ENCODE measurements at regions of chr19 and their contacts with region 1.

Region 1: GRCh38 chr19:50357178-50358100 is 8.0 kb downstream of the NAPSA start:
- DNase-seq: peak; percentile 86 to 90 (median 88)
- H3K4me3 ChIP-seq: peak overlapping the region; percentile 45 to 69
- H3K4me3 Mint-ChIP-seq: peak overlapping the region; percentile 88 to 95 (median 91)
- H3K27ac ChIP-seq: peak overlapping the region; percentile 95
- H3K27ac Mint-ChIP-seq: peak overlapping the region; percentile 97 to 98 (median 98)
- H3K4me1 ChIP-seq: peaks cover 12% of the 10 kb centered on the region
- H3K4me1 Mint-ChIP-seq: peaks cover 14 to 47% (median 27%) of the 10 kb centered on the region in 4 donors
- H3K27me3 ChIP-seq: no peaks in the 10 kb centered on the region
- H3K27me3 Mint-ChIP-seq: peaks cover 0 to 2% of the 10 kb centered on the region in 2 donors

Region 2: GRCh38 chr19:50333035-50333736 is 24.3 kb before region 1 on chr19:
- CTCF ChIA-PET with region 1: interaction called, 11 read pairs
- POLR2A ChIA-PET with region 1: interaction called, 27 read pairs
- intact Hi-C with region 1: loop called (anchors 1 kb)
- DNase-seq: peak in 4 of 5 donors; percentile 88 to 94 (median 92)
- H3K4me3 ChIP-seq: peak overlapping the region; percentile 67 to 76
- H3K4me3 Mint-ChIP-seq: peak overlapping the region; percentile 82 to 97 (median 92)
- H3K27ac ChIP-seq: peak overlapping the region; percentile 3
- H3K27ac Mint-ChIP-seq: peak overlapping the region; percentile 69 to 98 (median 95)
- H3K4me1 ChIP-seq: peaks cover 51% of the 10 kb centered on the region
- H3K4me1 Mint-ChIP-seq: peaks cover 28 to 62% (median 41%) of the 10 kb centered on the region in 4 donors
- H3K27me3 ChIP-seq: peaks cover 17% of the 10 kb centered on the region
- H3K27me3 Mint-ChIP-seq: peaks cover 14 to 38% of the 10 kb centered on the region in 2 donors

Region 3: DNA sequence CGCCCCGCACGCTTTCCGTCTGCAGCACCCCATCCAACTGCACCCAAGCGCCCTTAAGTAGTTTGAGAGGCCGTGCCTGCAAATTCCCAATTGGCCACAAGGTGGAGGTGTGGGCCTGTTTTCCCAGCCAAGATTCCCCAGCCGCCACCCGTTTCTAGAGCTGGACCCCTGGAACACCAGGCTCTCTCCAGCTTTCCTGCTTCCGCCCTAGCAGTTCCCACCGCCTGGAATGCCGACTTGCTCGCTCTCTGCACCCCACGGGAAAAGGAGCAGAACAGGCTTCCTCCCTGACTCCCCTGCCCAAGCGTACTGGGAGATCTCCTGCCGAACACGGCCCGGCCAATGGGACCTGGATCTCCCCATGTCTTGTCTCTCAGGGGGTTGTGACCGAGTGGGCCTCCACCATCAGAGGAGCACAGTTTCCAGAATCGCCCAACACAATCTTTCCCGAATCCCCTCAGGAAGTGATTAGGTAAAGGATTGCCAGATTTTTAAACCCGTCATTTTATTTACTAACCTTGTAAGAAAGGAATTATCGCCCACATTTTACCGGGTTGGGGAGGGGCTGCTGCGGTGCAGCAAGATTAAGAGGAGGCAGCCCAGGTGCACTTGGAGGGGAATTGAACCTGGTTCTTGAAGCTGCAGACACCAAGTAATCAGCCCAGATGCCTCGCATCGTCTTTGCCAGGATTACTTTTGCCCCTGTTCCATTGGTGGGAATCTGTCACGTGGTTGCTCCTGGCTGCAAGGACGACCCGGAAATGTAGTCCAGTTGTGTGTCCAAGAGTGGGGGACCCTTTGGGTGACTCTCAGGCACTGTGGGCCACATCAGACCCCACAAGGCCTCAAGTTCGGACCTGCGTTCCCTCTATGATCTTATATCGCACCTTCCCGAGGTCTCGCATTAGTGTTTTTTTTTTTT is 11.5 kb after region 1 on chr19:
- CTCF ChIA-PET with region 1: interaction called, 47 read pairs
- POLR2A ChIA-PET with region 1: interaction called, 35 read pairs
- intact Hi-C with region 1: loop called (anchors 1 kb)
- DNase-seq: peak; percentile 71 to 78 (median 78)
- H3K4me3 ChIP-seq: peak overlapping the region; percentile 32 to 88
- H3K4me3 Mint-ChIP-seq: peak overlapping the region; percentile 85 to 97 (median 90)
- H3K27ac ChIP-seq: peak overlapping the region; percentile 56
- H3K27ac Mint-ChIP-seq: peak overlapping the region; percentile 62 to 96 (median 90)
- H3K4me1 ChIP-seq: peaks cover 26% of the 10 kb centered on the region
- H3K4me1 Mint-ChIP-seq: peaks cover 17 to 43% (median 28%) of the 10 kb centered on the region in 4 donors
- H3K27me3 ChIP-seq: no peaks in the 10 kb centered on the region
- H3K27me3 Mint-ChIP-seq: no peaks in the 10 kb centered on the region

Region 4: GRCh38 chr19:50383852-50384684 is 26.6 kb after region 1 on chr19 and contains the start of gene POLD1:
- CTCF ChIA-PET with region 1: interaction called, 10 read pairs
- POLR2A ChIA-PET with region 1: interaction called, 28 read pairs
- intact Hi-C with region 1: loop called (anchors 1 kb)
- DNase-seq: peak; percentile 98 to 99 (median 99)
- H3K4me3 ChIP-seq: peak within 1 kb of the TSS; percentile 38 to 80
- H3K4me3 Mint-ChIP-seq: peak within 1 kb of the TSS; percentile 91 to 97 (median 94)
- H3K27ac ChIP-seq: peak within 1 kb of the TSS; percentile 67
- H3K27ac Mint-ChIP-seq: peak within 1 kb of the TSS; percentile 91 to 98 (median 94)
- H3K4me1 ChIP-seq: peaks cover 16% of the 10 kb centered on the region
- H3K4me1 Mint-ChIP-seq: peaks cover 22 to 39% (median 32%) of the 10 kb centered on the region in 4 donors
- H3K27me3 ChIP-seq: no peaks in the 10 kb centered on the region
- H3K27me3 Mint-ChIP-seq: no peaks in the 10 kb centered on the region
- total RNA-seq, gene POLD1: 40.4 to 41.1 TPM

Region 5: DNA sequence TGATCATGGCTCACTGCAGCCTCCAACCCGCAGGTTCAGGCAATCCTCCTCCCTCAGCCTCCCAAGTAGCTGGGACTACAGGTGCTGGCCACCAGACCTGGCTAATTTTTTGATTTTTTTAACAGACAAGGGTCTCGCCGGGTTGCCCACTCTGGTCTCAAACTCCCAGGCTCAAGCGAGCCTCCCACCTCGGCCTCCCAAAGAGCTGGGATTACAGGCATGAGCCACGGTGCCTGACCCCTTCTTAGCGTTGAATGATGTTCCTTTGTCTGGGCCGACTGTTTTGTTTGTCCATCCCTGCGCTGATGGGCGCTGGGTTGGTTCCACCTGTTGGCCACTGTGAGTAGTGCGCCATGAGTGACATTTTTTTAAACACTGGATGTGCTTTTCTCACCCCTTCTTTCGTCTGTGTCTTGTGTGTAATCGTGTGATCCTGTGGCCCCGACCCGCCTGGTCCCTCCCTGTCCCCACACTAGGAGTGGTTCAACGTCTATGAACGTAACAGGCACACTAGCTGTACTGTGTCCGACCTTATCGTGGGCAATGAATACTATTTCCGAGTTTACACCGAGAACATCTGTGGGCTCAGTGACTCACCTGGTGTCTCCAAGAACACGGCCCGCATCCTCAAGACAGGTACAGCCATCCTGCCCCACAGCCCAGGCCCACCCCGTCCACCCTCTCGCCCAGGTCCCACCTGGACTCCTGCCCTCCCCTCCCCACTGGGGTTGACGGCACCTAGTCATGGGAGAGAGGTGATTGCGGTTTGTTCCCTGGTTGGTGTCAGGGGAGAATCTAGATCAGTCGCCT is 103.8 kb after region 1 on chr19:
- CTCF ChIA-PET with region 1: interaction called, 19 read pairs
- POLR2A ChIA-PET with region 1: interaction called, 9 read pairs
- intact Hi-C with region 1: loop called (anchors 1 kb)
- DNase-seq: peak in 4 of 5 donors; percentile 37 to 51 (median 46)
- H3K4me3 ChIP-seq: no peak overlapping the region
- H3K4me3 Mint-ChIP-seq: no peak overlapping the region
- H3K27ac ChIP-seq: no peak overlapping the region
- H3K27ac Mint-ChIP-seq: peak overlapping the region in 1 of 7 donors; percentile 63
- H3K4me1 ChIP-seq: no peaks in the 10 kb centered on the region
- H3K4me1 Mint-ChIP-seq: peaks cover 3 to 6% (median 4%) of the 10 kb centered on the region in 4 donors
- H3K27me3 ChIP-seq: peaks cover 2% of the 10 kb centered on the region
- H3K27me3 Mint-ChIP-seq: peaks cover 5 to 18% of the 10 kb centered on the region in 2 donors

Region 6: GRCh38 chr19:50511068-50511822 is 153.8 kb after region 1 on chr19 and contains the start of gene JOSD2:
- CTCF ChIA-PET with region 1: no interaction called
- POLR2A ChIA-PET with region 1: interaction called, 22 read pairs
- intact Hi-C with region 1: loop called (anchors 1 kb)
- DNase-seq: peak; percentile 94 to 99 (median 98)
- H3K4me3 ChIP-seq: peak within 1 kb of the TSS; percentile 61 to 83
- H3K4me3 Mint-ChIP-seq: peak within 1 kb of the TSS; percentile 89 to 97 (median 92)
- H3K27ac ChIP-seq: peak within 1 kb of the TSS; percentile 78
- H3K27ac Mint-ChIP-seq: peak within 1 kb of the TSS; percentile 97 to 99 (median 99)
- H3K4me1 ChIP-seq: peaks cover 13% of the 10 kb centered on the region
- H3K4me1 Mint-ChIP-seq: peaks cover 7 to 32% (median 20%) of the 10 kb centered on the region in 4 donors
- H3K27me3 ChIP-seq: no peaks in the 10 kb centered on the region
- H3K27me3 Mint-ChIP-seq: peaks cover 0 to 9% of the 10 kb centered on the region in 2 donors
- total RNA-seq, gene JOSD2: 29.5 to 35.8 TPM

Region 7: GRCh38 chr19:50777754-50778303 is 420.4 kb after region 1 on chr19:
- CTCF ChIA-PET with region 1: interaction called, 24 read pairs
- POLR2A ChIA-PET with region 1: no interaction called
- intact Hi-C with region 1: loop called (anchors 1 kb)
- DNase-seq: no peak
- H3K4me3 ChIP-seq: no peak overlapping the region
- H3K4me3 Mint-ChIP-seq: peak overlapping the region in 1 of 8 donors; percentile 11
- H3K27ac ChIP-seq: no peak overlapping the region
- H3K27ac Mint-ChIP-seq: no peak overlapping the region
- H3K4me1 ChIP-seq: no peaks in the 10 kb centered on the region
- H3K4me1 Mint-ChIP-seq: peaks cover 0 to 8% (median 3%) of the 10 kb centered on the region in 4 donors
- H3K27me3 ChIP-seq: peaks cover 24% of the 10 kb centered on the region
- H3K27me3 Mint-ChIP-seq: peaks cover 41 to 53% of the 10 kb centered on the region in 2 donors

Measured in CD4-positive, alpha-beta memory T cell (primary cell).